Right cardiac atrium (tissue), 5 donors: ENCODE measurements at regions of chr15 and their contacts with region 1.

Region 1: GRCh38 chr15:81625896-81626295 is 251.9 kb upstream of the TMC3 start:
- DNase-seq: no peak
- ATAC-seq: no peak
- H3K4me3 ChIP-seq: no peak overlapping the region
- H3K27ac ChIP-seq: no peak overlapping the region
- H3K4me1 ChIP-seq: no peaks in the 10 kb centered on the region
- H3K27me3 ChIP-seq: no peaks in the 10 kb centered on the region

Region 2: GRCh38 chr15:81939604-81940440 is 313.9 kb after region 1 on chr15:
- intact Hi-C with region 1: loop called in 1 of 4 experiments (anchors 10 kb)
- DNase-seq: no peak
- ATAC-seq: no peak
- H3K4me3 ChIP-seq: no peak overlapping the region
- H3K27ac ChIP-seq: no peak overlapping the region
- H3K4me1 ChIP-seq: no peaks in the 10 kb centered on the region
- H3K27me3 ChIP-seq: no peaks in the 10 kb centered on the region